ENCODE measurements at regions of chr17 and their contacts with region 1.

Region 1: GRCh38 chr17:38349097-38349730 is 2.4 kb upstream of the SOCS7 start:
- DNase-seq: peak; percentile 79 to 88
- H3K4me3 ChIP-seq: no peak overlapping the region
- H3K27ac ChIP-seq: peak overlapping the region in 1 of 2 donors; percentile 34
- H3K4me1 ChIP-seq: no peaks in the 10 kb centered on the region
- H3K27me3 ChIP-seq: peaks cover 0 to under 1% of the 10 kb centered on the region in 2 donors
- CTCF ChIP-seq: peak; percentile 33 to 78 (median 76)
- POLR2A ChIP-seq: no peak

Region 2: GRCh38 chr17:38415250-38416194 is 66.3 kb after region 1 on chr17:
- intact Hi-C with region 1: loop called (anchors 10 kb)
- DNase-seq: no peak
- H3K4me3 ChIP-seq: peak overlapping the region in 1 of 3 donors; percentile 15
- H3K27ac ChIP-seq: no peak overlapping the region
- H3K4me1 ChIP-seq: no peaks in the 10 kb centered on the region
- H3K27me3 ChIP-seq: peaks cover 5 to 18% of the 10 kb centered on the region in 2 donors
- CTCF ChIP-seq: no peak
- POLR2A ChIP-seq: no peak

Region 3: GRCh38 chr17:39270923-39271322 is 921.7 kb after region 1 on chr17:
- intact Hi-C with region 1: no loop called
- DNase-seq: no peak
- H3K4me3 ChIP-seq: no peak overlapping the region
- H3K27ac ChIP-seq: no peak overlapping the region
- H3K4me1 ChIP-seq: no peaks in the 10 kb centered on the region
- H3K27me3 ChIP-seq: no peaks in the 10 kb centered on the region
- CTCF ChIP-seq: no peak
- POLR2A ChIP-seq: no peak